ENCODE measurements at regions of chr10 and their contacts with region 1.

Region 1: DNA sequence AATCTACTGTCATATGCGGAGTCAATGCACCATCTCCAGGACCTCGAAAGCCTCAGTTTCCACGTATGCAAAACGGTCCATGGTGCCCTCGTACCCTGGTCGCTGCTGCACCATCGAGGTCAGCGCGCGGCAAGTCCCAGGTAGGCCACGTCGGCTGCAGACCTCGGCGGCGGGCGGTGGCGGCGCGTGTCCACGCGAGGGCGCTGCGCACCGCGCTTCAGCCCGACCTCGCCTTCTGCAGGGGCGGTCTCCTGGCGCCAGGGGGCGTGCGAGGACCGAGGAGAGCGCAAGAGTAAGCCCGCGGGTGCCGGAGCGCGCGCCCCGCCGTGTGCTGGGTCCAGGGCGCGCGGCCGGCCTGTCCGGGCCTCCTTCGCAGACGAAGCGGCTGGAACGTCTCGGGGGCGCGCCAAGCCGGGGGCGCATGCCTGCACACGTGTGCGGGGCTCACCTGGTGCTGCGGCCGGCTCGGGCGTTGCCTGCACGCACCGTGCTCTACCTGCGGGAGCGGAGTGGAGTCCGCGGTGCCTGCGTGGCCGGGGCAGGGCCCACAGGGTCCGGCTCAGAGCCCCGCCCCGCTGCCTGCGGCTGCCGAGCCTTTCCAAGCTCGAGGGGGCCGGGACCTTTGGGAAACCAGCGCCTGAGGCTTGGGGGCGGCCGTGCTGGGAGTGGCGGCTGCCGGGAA is 54.0 kb downstream of the GLRX3 start:
- DNase-seq: peak; percentile 13
- ATAC-seq: peak; percentile 94
- H3K4me3 ChIP-seq: peak overlapping the region; percentile 25; the same call in 1 of the 2 replicates
- H3K27ac ChIP-seq: no peak overlapping the region
- H3K4me1 ChIP-seq: no peaks in the 10 kb centered on the region
- H3K27me3 ChIP-seq: no peaks in the 10 kb centered on the region
- CTCF ChIP-seq: peak; percentile 97 to 100 (median 99); a peak in 5 of 6 replicates
- EP300 ChIP-seq: no peak
- POLR2A ChIP-seq: peak; percentile 60; the same call in 1 of the 2 replicates
- RAD21 ChIP-seq: peak; percentile 78

Region 2: GRCh38 chr10:130232166-130233034 is 42.2 kb after region 1 on chr10:
- CTCF ChIA-PET with region 1: no interaction called
- POLR2A ChIA-PET with region 1: no interaction called
- RAD21 ChIA-PET with region 1: no interaction called
- SMC1A ChIA-PET with region 1: no interaction called
- in situ Hi-C with region 1: no loop called
- intact Hi-C with region 1: no loop called
- DNase-seq: no peak
- ATAC-seq: no peak
- H3K4me3 ChIP-seq: no peak overlapping the region
- H3K27ac ChIP-seq: no peak overlapping the region
- H3K4me1 ChIP-seq: no peaks in the 10 kb centered on the region
- H3K27me3 ChIP-seq: no peaks in the 10 kb centered on the region
- CTCF ChIP-seq: no peak
- EP300 ChIP-seq: no peak
- POLR2A ChIP-seq: no peak
- RAD21 ChIP-seq: no peak

Region 3: DNA sequence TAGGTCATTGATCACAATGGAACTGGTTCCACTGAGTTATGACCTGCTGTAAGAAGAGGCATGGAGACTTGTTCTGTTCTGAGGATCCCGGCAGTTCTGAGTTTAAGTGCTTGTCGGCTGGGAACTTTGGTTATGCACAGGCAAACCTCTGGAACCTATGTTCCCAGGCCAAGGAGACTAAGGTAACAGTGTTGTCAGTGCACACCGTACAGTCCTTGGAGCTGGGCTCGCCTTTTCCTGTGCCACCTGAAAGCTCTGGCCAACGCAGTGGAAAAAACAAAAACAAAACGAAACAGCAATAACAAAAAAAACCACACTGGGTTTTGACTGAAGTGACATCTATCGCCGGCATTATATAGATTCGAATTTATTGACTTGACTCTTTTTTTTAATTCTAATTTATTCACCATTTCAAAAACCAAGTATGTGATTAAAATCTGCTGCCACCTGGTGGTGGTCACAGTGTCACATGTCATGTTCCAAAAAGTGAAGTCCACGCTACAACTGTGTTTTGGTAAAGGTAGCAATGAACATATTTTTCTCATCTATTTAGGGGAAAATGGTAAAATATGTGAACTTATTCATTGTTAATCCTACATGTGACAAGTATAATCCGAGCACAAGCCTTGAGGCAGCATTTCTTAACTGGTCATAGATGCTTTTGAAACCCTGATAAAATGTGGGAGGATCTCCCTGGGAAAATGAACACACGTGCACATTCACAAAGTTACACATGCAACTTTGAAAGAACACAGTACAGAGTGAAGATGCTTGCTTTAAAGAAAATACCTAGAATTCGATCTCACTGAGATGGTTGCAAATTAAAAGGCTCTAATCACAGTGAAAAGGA is 1596.8 kb after region 1 on chr10:
- CTCF ChIA-PET with region 1: no interaction called
- POLR2A ChIA-PET with region 1: no interaction called
- RAD21 ChIA-PET with region 1: no interaction called
- SMC1A ChIA-PET with region 1: no interaction called
- in situ Hi-C with region 1: loop called (anchors 5 kb)
- intact Hi-C with region 1: no loop called
- DNase-seq: peak; percentile 2
- ATAC-seq: no peak
- H3K4me3 ChIP-seq: no peak overlapping the region
- H3K27ac ChIP-seq: no peak overlapping the region
- H3K4me1 ChIP-seq: no peaks in the 10 kb centered on the region
- H3K27me3 ChIP-seq: no peaks in the 10 kb centered on the region
- CTCF ChIP-seq: peak; percentile 56 to 62 (median 60); a peak in 5 of 6 replicates
- EP300 ChIP-seq: no peak
- POLR2A ChIP-seq: no peak
- RAD21 ChIP-seq: peak; percentile 78

Region 4: GRCh38 chr10:131874991-131875451 is 1684.8 kb after region 1 on chr10:
- CTCF ChIA-PET with region 1: interaction called, 5 read pairs
- POLR2A ChIA-PET with region 1: no interaction called
- RAD21 ChIA-PET with region 1: no interaction called
- SMC1A ChIA-PET with region 1: no interaction called
- in situ Hi-C with region 1: loop called (anchors 5 kb)
- intact Hi-C with region 1: loop called (anchors 2 kb)
- DNase-seq: no peak
- ATAC-seq: peak; percentile 96
- H3K4me3 ChIP-seq: no peak overlapping the region
- H3K27ac ChIP-seq: no peak overlapping the region
- H3K4me1 ChIP-seq: no peaks in the 10 kb centered on the region
- H3K27me3 ChIP-seq: no peaks in the 10 kb centered on the region
- CTCF ChIP-seq: peak; percentile 74 to 91 (median 79)
- EP300 ChIP-seq: no peak
- POLR2A ChIP-seq: no peak
- RAD21 ChIP-seq: peak; percentile 85

Measured in GM12878 (cell line).